ENCODE measurements at regions of chr2 and their contacts with region 1.

Region 1: DNA sequence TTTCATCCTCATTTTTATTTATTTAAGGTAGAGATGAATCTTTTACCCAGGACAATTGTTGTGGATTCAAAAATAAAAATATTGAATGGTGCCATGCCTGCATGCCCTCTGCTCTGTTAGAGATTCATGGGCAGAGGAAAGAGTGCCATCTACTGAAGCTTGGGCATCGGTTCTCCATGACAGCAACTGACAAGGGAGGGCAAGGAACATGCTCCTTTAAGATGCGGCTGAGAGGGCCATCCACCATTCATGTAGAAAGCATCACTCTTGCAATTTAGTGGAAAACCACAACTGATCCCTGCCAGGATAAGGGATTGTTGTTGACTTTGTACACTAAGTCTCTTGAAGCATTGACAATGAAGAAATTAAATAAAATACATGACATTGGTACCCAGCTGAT is 79.9 kb downstream of the PARD3B start:
- DNase-seq: peak in 41 of 42 donors; percentile 4 to 83 (median 52)

Region 2: DNA sequence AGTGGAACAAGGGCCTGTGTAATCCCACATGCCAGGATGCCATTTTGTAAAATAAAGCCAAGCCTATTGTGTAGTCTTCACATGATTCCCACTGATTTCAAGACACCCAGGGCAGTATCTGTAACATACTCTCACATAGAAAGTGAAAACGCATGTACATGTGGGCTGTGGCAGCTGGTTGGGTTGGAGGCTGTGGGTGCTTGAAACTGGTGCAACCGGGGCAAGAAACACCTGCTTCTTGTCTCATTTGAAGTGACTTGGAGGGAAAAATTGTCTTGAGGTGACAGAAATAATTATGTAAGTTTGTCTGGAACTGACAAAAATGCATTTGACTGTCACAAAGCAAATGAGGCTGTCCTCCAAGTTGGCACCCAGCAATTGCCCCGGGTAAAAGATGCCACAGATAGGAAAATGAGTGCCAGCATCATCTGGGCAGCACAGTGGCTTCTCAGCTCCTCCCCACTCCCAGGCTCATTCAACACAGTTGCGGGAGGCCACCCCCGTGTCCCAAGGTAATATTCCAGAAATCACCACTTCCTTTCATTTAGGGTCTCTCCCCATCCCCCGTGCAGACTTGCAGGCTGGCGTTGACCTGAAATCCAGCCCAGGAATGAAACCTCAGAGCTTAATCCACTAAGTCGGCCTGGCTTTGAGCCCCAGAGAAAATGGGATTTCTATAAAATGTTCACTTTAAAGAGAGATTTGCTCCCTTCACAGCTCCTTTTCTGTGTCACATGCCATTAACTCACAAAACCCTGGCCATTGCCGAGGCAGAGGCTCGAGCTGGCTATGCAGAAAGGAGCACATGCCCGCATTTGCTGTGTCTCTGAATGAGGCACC is 373.8 kb before region 1 on chr2:
- intact Hi-C with region 1: loop called (anchors 10 kb)
- DNase-seq: no peak

Region 3: GRCh38 chr2:204840504-204840903 is 215.3 kb after region 1 on chr2:
- intact Hi-C with region 1: no loop called
- DNase-seq: no peak

Region 4: GRCh38 chr2:205293559-205293958 is 668.4 kb after region 1 on chr2:
- intact Hi-C with region 1: no loop called
- DNase-seq: no peak

Measured in head of caudate nucleus (tissue), 42 donors.